CD8-positive, alpha-beta memory T cell (primary cell): ENCODE measurements at regions of chr18 and their contacts with region 1.

Region 1: GRCh38 chr18:74378179-74378682 is 62.6 kb downstream of the C18orf63 start:
- DNase-seq: peak in 2 of 5 donors; percentile 35 to 78
- H3K4me3 ChIP-seq: peak overlapping the region; percentile 39
- H3K4me3 Mint-ChIP-seq: peak overlapping the region in 6 of 7 donors; percentile 1 to 62 (median 30)
- H3K27ac ChIP-seq: no peak overlapping the region
- H3K27ac Mint-ChIP-seq: peak overlapping the region; percentile 34 to 80 (median 71)
- H3K4me1 ChIP-seq: peaks cover 50% of the 10 kb centered on the region
- H3K4me1 Mint-ChIP-seq: peaks cover 30 to 50% (median 34%) of the 10 kb centered on the region in 3 donors
- H3K27me3 ChIP-seq: no peaks in the 10 kb centered on the region
- H3K27me3 Mint-ChIP-seq: peaks cover 0 to under 1% of the 10 kb centered on the region in 2 donors

Region 2: GRCh38 chr18:74353169-74353775 is 25.0 kb before region 1 on chr18:
- CTCF ChIA-PET with region 1: interaction called, 26 read pairs
- POLR2A ChIA-PET with region 1: no interaction called
- DNase-seq: peak; percentile 21 to 72 (median 40)
- H3K4me3 ChIP-seq: no peak overlapping the region
- H3K4me3 Mint-ChIP-seq: no peak overlapping the region
- H3K27ac ChIP-seq: no peak overlapping the region
- H3K27ac Mint-ChIP-seq: no peak overlapping the region
- H3K4me1 ChIP-seq: peaks cover 4% of the 10 kb centered on the region
- H3K4me1 Mint-ChIP-seq: peaks cover 3 to 12% (median 9%) of the 10 kb centered on the region in 3 donors
- H3K27me3 ChIP-seq: no peaks in the 10 kb centered on the region
- H3K27me3 Mint-ChIP-seq: peaks cover 9 to 11% of the 10 kb centered on the region in 2 donors